Activated CD4-positive, alpha-beta T cell treated with anti-CD3 and anti-CD28 coated beads for 36 hours (primary cell): ENCODE measurements at regions of chr13 and their contacts with region 1.

Region 1: GRCh38 chr13:50911937-50912795 is 2.6 kb downstream of the RNASEH2B start:
- DNase-seq: peak; percentile 96
- ATAC-seq: peak; percentile 52
- H3K4me3 Mint-ChIP-seq: peak overlapping the region; percentile 95
- H3K27ac Mint-ChIP-seq: peak overlapping the region; percentile 99
- H3K4me1 Mint-ChIP-seq: peaks cover 44% of the 10 kb centered on the region
- H3K27me3 Mint-ChIP-seq: no peaks in the 10 kb centered on the region

Region 2: GRCh38 chr13:49443704-49444523 is 1468.3 kb before region 1 on chr13 and contains the starts of genes CAB39L and SETDB2:
- CTCF ChIA-PET with region 1: no interaction called
- POLR2A ChIA-PET with region 1: no interaction called
- intact Hi-C with region 1: loop called in 1 of 2 experiments (anchors 2 kb)
- DNase-seq: peak; percentile 99
- ATAC-seq: peak; percentile 94
- H3K4me3 Mint-ChIP-seq: peak within 1 kb of the TSS; percentile 100
- H3K27ac Mint-ChIP-seq: peak within 1 kb of the TSS; percentile 100
- H3K4me1 Mint-ChIP-seq: peaks cover 57% of the 10 kb centered on the region
- H3K27me3 Mint-ChIP-seq: no peaks in the 10 kb centered on the region
- total RNA-seq, gene CAB39L: 4.8 to 5.7 TPM
- total RNA-seq, gene SETDB2: 14.2 to 15.1 TPM

Region 3: DNA sequence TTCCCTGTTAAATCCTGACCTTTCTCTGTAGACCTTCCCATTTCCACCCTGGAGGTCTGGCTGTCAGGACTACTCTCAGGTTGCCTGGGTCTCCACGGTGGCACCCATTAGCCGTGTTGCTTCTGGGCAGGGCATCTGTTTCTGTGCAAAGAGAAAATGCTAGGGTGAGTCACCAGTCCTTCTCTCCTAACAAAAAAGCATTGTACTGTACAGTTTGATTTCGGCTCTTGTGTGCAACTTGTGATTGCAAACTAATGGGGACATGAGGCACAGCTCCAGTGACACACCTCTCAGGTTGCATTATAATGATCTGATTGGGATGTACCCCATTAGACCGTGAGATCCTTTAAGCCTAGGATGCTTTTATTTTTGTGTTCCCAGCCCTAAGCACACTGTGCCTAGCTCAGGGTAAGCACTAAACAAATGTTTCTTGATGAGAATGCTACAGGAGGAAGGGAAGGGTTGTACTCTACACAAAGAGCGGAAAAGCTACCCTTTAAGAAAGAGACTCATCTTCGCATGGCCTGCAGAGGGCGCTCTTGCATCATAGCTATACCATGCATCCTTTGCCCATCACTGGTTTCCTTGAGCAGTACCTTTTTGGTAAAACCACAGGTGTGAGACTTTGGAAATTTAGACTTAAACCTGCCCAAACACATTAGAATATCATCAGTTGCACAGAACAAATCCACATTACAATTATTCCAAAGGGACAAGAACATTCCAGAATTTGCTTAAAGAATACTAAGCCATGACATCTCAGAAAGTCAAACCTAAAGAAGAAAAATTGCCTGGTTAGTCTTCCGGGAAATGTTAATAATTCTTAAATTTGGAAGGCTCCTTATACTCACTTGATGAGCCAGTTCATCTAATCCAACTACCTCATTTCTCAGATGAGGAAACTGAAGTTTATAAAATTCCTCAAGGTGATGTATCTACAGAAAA is 935.6 kb before region 1 on chr13:
- CTCF ChIA-PET with region 1: interaction called, 19 read pairs
- POLR2A ChIA-PET with region 1: no interaction called
- intact Hi-C with region 1: loop called (anchors 1 to 2 kb)
- DNase-seq: peak; percentile 87
- ATAC-seq: peak; percentile 83
- H3K4me3 Mint-ChIP-seq: no peak overlapping the region
- H3K27ac Mint-ChIP-seq: no peak overlapping the region
- H3K4me1 Mint-ChIP-seq: no peaks in the 10 kb centered on the region
- H3K27me3 Mint-ChIP-seq: no peaks in the 10 kb centered on the region

Region 4: DNA sequence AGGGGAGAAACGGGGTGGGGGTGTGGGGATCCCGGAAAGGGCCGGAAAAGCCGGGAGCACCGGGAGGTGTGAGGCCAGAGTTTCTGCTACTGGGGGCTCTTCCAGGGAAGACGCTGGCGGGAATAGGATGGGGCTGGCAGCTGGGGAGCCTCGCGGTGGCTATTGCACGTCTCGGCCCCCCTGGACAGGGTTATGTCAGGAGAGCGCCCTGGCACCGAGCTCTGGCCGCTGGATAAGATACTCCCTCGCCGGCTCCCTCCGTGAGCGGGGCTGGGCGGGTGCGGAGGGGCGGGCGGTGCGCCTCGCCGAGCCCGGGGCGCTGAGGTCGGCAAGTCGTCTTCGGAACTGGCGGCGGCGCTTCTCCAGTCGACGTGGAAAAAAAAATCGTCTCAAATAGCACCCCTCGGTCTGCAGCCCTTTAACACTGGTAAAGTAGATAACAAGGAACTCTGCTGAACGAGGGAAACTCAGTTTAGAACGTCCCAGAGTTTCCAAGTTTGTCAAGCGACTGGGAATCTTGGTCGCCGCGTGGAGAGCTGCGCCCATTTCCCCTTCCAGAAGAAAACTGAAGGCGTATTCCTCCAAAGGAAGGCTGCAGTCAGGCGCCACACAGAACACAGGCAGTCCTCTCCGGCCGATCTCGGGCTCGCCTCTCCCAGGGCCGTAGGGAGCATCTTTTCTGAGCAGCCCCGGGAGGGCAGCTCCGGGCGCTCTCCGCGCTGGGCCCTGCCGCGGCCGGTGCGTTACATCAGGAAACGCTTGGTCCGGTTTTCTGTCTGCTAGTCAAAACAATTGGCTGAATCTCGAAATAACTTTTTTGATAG is 781.8 kb before region 1 on chr13:
- CTCF ChIA-PET with region 1: interaction called, 3 read pairs
- POLR2A ChIA-PET with region 1: no interaction called
- intact Hi-C with region 1: loop called (anchors 5 kb)
- DNase-seq: peak; percentile 52
- ATAC-seq: no peak
- H3K4me3 Mint-ChIP-seq: peak overlapping the region; percentile 67
- H3K27ac Mint-ChIP-seq: no peak overlapping the region
- H3K4me1 Mint-ChIP-seq: peaks cover 60% of the 10 kb centered on the region
- H3K27me3 Mint-ChIP-seq: peaks cover 63% of the 10 kb centered on the region

Region 5: DNA sequence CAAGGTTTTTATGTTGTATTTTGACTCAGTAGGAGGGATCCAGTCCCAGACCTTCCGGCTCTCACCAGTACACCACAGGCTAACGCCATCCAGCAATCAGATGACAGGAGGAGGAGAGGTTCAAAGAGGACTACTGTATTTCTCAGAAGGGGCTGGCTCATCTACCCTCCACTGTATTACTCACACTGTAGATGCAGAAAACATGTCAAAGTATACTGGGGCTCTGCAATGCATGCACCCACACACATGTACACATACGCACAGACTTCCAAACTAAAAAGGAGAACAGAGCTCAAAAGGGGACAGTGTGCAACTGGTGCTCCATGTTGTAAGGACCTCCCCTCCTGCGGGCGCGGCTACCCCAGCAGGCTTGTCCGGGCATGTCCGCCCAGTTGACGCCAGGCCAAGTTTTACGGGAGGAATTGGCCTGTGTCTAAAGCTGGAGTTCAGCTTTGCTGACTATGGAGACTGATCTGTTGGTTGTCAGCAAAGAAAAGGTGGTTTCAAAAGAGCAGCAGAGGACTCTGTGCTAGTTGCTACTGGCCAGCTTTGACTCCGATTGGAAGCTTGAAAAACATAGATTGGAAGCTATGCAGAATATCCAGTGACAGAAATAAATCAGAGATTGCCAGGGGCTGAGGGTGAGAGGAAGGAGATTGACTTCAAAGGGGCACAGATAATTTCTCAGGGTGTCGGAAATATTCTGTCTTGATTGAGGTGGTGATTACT is 382.8 kb before region 1 on chr13:
- CTCF ChIA-PET with region 1: no interaction called
- POLR2A ChIA-PET with region 1: no interaction called
- intact Hi-C with region 1: loop called (anchors 5 kb)
- DNase-seq: peak; percentile 46
- ATAC-seq: peak; percentile 94
- H3K4me3 Mint-ChIP-seq: no peak overlapping the region
- H3K27ac Mint-ChIP-seq: no peak overlapping the region
- H3K4me1 Mint-ChIP-seq: peaks cover 30% of the 10 kb centered on the region
- H3K27me3 Mint-ChIP-seq: no peaks in the 10 kb centered on the region

Region 6: GRCh38 chr13:50829896-50830295 is 82.3 kb before region 1 on chr13:
- CTCF ChIA-PET with region 1: interaction called, 7 read pairs
- POLR2A ChIA-PET with region 1: no interaction called
- intact Hi-C with region 1: loop called in 1 of 2 experiments (anchors 5 kb)
- DNase-seq: no peak
- ATAC-seq: no peak
- H3K4me3 Mint-ChIP-seq: no peak overlapping the region
- H3K27ac Mint-ChIP-seq: no peak overlapping the region
- H3K4me1 Mint-ChIP-seq: peaks cover 9% of the 10 kb centered on the region
- H3K27me3 Mint-ChIP-seq: peaks cover 2% of the 10 kb centered on the region

Region 7: DNA sequence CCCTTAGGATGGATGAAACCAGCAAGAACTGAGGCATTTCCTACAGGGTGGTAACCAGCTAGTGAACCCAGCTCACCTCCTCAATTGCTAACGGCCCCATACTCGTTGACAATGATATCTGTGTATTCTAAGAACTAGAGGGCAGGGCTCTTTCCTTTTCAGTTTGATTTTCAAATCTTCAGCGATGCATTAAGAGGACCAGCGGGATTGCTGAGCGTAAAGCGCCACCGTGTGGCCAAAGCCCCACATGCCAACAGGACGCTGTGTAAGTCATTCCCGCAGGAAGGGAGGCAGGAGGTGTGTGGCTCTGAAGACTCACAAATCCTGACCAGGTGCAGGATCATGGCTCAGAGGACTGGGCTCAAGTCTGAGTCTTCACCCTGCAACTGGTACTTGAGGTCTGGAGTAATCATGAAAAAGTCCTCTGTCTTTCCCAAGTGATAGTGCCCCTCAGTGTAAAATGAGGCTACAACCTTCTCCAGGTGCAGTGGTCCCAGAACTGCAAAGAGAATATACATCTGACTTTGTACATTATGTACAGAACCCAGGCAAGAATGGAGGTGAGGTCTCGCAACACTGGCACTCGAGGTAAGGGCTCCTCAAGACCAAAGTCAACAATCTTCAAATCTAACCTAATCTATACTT is 158.0 kb after region 1 on chr13:
- CTCF ChIA-PET with region 1: interaction called, 4 read pairs
- POLR2A ChIA-PET with region 1: no interaction called
- intact Hi-C with region 1: loop called (anchors 5 to 10 kb)
- DNase-seq: peak; percentile 89
- ATAC-seq: peak; percentile 96
- H3K4me3 Mint-ChIP-seq: no peak overlapping the region
- H3K27ac Mint-ChIP-seq: no peak overlapping the region
- H3K4me1 Mint-ChIP-seq: peaks cover 7% of the 10 kb centered on the region
- H3K27me3 Mint-ChIP-seq: peaks cover 16% of the 10 kb centered on the region

Region 8: GRCh38 chr13:52128714-52129700 is 1216.8 kb after region 1 on chr13 and contains the start of gene NEK5:
- CTCF ChIA-PET with region 1: no interaction called
- POLR2A ChIA-PET with region 1: no interaction called
- intact Hi-C with region 1: no loop called
- DNase-seq: peak; percentile 76
- ATAC-seq: peak; percentile 82
- H3K4me3 Mint-ChIP-seq: peak within 1 kb of the TSS; percentile 77
- H3K27ac Mint-ChIP-seq: peak within 1 kb of the TSS; percentile 34
- H3K4me1 Mint-ChIP-seq: peaks cover 21% of the 10 kb centered on the region
- H3K27me3 Mint-ChIP-seq: peaks cover 6% of the 10 kb centered on the region
- total RNA-seq, gene NEK5: 0.16 to 0.44 TPM